Spleen (tissue), 13 donors: ENCODE measurements at regions of chr1 and their contacts with region 1.

Region 1: GRCh38 chr1:18099026-18099425 is 8.6 kb upstream of the IGSF21 start:
- DNase-seq: no peak
- H3K4me3 ChIP-seq: no peak overlapping the region
- H3K27ac ChIP-seq: no peak overlapping the region
- H3K4me1 ChIP-seq: peaks cover 0 to 6% (median 0%) of the 10 kb centered on the region in 6 donors
- H3K27me3 ChIP-seq: peaks cover 0 to 42% (median 0%) of the 10 kb centered on the region in 7 donors
- CTCF ChIP-seq: no peak
- POLR2A ChIP-seq: no peak

Region 2: DNA sequence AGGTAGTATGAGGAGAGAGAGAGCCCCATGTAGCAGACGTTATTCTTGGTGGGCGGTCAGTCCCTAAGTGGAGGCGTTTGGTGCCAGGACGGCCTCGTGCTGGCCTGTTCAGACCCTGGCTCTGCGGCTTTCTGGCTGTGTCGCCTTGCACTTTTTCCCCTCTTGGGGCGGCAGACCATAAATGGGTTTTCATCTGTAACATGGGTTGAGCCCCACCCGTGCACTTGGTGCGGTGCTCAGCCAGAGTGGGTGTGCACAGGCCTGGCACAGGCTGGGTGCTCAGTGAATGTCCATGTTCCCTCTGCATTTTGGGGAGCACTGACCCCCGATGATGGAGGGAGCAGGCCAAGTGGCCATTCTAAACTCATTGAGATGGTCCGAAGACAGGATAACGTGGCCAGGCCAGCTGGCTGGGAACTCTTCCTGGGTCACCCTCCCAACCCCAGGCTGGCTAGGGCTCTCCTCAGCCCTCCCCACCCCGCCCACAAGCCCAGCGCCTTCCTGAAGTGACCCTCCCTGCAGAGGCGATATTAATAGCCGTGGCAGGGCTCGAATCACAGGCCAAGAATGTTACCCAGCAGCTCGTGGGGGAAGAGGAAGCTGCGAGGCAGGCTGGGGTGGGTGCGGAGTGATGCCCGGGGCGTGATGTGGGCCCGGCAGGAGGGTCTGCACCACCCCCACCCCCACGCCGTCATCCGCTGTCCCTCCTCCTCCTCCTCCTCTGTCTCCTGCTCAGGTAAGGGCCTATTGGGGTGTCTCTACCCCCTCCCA is 481.1 kb before region 1 on chr1:
- intact Hi-C with region 1: no loop called
- DNase-seq: no peak
- H3K4me3 ChIP-seq: peak overlapping the region in 2 of 8 donors; percentile 0 to 35
- H3K27ac ChIP-seq: peak overlapping the region in 3 of 8 donors; percentile 10 to 48 (median 44)
- H3K4me1 ChIP-seq: peaks cover 0 to 21% (median 0%) of the 10 kb centered on the region in 6 donors
- H3K27me3 ChIP-seq: peaks cover 0 to 15% (median 0%) of the 10 kb centered on the region in 7 donors
- CTCF ChIP-seq: no peak
- POLR2A ChIP-seq: no peak

Region 3: GRCh38 chr1:17661546-17662157 is 437.4 kb before region 1 on chr1:
- intact Hi-C with region 1: loop called (anchors 5 kb)
- DNase-seq: peak; percentile 83
- H3K4me3 ChIP-seq: no peak overlapping the region
- H3K27ac ChIP-seq: no peak overlapping the region
- H3K4me1 ChIP-seq: peaks cover 0 to 3% (median 0%) of the 10 kb centered on the region in 6 donors
- H3K27me3 ChIP-seq: no peaks in the 10 kb centered on the region
- CTCF ChIP-seq: peak; percentile 39 to 84 (median 71)
- POLR2A ChIP-seq: no peak